ENCODE measurements at regions of chr13 and their contacts with region 1.

Region 1: DNA sequence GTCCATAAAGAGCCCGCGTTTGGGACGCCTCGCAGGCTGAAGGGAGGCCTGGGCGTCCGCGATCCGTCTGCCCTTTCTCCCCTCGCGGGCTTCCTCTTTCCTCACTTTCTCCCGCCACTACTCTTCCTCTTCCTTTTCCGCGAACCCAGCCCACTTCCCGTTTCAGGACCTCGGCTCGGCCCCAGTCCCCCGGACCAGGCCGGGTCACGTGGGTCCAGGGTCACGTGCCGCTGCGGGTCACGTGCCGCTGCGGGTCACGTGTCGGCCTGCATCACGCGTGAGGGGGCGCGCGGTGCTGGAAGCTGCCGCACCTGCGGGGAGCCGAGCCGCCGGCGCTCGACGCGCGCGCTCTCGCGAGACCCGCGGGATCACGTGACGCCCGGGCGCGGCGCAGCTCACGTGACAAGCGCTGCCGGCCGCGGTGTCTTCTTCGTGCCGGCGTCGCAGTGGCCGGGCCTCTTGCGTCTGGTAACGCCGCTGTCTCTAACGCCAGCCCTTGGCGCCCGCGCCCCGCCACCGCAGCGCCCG is at the start of gene LAMP1:
- DNase-seq: peak; percentile 92
- ATAC-seq: peak; percentile 70
- H3K4me3 ChIP-seq: peak within 1 kb of the TSS; percentile 95
- H3K27ac ChIP-seq: peak within 1 kb of the TSS; percentile 45
- H3K4me1 ChIP-seq: peaks cover 9% of the 10 kb centered on the region
- H3K27me3 ChIP-seq: no peaks in the 10 kb centered on the region
- CTCF ChIP-seq: no peak
- total RNA-seq, gene LAMP1: 110 and 111 TPM in 2 replicates

Region 2: DNA sequence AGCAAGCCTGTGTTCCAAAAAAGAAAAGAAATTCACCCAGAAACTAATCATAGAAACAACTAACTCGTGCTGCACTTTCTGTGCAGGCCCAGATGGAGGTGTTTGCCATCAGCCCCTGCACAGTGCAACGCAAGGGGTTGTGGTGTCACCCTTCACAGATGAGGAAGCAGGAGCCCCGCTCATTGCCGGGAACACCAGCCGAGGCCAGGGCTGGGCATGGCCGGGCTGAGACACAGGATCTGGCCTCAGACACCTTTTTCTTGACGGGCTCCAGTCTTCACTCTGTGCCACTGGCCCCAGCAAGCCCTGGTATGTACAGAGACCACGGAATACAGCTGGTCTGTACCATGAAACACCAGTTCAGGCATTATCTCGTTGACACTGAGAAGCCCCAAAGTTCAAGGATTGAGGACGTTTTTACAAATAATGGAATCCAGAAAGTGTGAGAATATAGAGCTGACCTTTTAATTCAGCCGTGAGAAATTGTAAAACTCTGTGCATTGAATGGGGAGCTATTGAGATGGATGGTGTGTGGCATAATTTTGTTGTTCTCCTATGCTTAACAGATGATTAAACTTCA is 44.3 kb before region 1 on chr13:
- CTCF ChIA-PET with region 1: no interaction called
- POLR2A ChIA-PET with region 1: interaction called, 32 read pairs
- intact Hi-C with region 1: no loop called
- DNase-seq: no peak
- ATAC-seq: no peak
- H3K4me3 ChIP-seq: no peak overlapping the region
- H3K27ac ChIP-seq: no peak overlapping the region
- H3K4me1 ChIP-seq: no peaks in the 10 kb centered on the region
- H3K27me3 ChIP-seq: no peaks in the 10 kb centered on the region
- CTCF ChIP-seq: no peak

Region 3: DNA sequence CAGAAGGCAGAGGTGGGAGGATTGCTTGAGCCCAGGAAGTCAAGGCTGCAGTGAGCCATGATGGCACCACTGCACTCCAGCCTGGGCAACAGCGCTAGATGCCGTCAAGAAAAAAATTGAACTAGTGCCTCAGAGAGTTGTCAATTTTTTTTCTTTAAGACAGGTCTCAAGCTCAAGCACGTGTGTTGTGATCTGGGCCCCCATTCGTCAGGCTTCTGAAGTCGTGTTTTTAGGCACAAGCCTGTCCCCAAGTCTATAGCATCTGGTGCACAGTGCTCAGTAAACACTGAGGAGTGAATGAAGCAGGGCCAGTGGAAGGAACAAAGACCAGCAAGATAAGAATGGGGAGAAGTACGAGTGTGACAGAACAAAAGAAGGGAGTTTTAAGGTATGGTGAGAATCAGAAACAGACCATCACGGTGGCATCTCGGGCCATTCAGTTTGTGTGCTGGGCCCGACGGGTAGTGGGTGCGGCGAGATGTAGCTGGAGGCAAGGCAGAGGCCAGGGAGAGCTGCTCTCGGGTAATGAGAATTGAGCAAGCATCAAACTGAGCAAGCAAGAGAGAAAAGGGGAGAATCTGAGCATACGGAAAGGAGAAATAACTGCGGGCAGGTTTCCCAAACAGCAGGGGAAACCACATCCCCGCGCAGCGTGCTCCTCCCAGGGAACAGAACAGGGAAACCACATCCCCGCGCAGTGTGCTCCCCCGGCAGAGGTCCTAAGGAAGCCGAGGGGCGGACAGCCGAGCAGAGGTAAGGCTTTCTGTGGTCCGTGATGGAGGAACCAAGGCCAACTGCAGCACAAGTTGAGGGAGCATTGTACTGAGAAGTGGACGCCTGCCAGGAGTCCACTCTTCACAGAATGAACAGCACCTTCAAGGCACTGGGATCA is 23.3 kb before region 1 on chr13:
- CTCF ChIA-PET with region 1: no interaction called
- POLR2A ChIA-PET with region 1: no interaction called
- intact Hi-C with region 1: no loop called
- DNase-seq: no peak
- ATAC-seq: no peak
- H3K4me3 ChIP-seq: no peak overlapping the region
- H3K27ac ChIP-seq: no peak overlapping the region
- H3K4me1 ChIP-seq: peaks cover 7% of the 10 kb centered on the region; the same call in 1 of the 2 replicates
- H3K27me3 ChIP-seq: no peaks in the 10 kb centered on the region
- CTCF ChIP-seq: no peak

Region 4: GRCh38 chr13:113283904-113284303 is 13.0 kb before region 1 on chr13:
- CTCF ChIA-PET with region 1: no interaction called
- POLR2A ChIA-PET with region 1: interaction called, 13 read pairs
- intact Hi-C with region 1: no loop called
- DNase-seq: no peak
- ATAC-seq: no peak
- H3K4me3 ChIP-seq: no peak overlapping the region
- H3K27ac ChIP-seq: no peak overlapping the region
- H3K4me1 ChIP-seq: no peaks in the 10 kb centered on the region
- H3K27me3 ChIP-seq: no peaks in the 10 kb centered on the region
- CTCF ChIP-seq: no peak

Region 5: GRCh38 chr13:113322043-113322461 is 25.1 kb after region 1 on chr13:
- CTCF ChIA-PET with region 1: no interaction called
- POLR2A ChIA-PET with region 1: interaction called, 44 read pairs
- intact Hi-C with region 1: no loop called
- DNase-seq: no peak
- ATAC-seq: no peak
- H3K4me3 ChIP-seq: no peak overlapping the region
- H3K27ac ChIP-seq: no peak overlapping the region
- H3K4me1 ChIP-seq: no peaks in the 10 kb centered on the region
- H3K27me3 ChIP-seq: no peaks in the 10 kb centered on the region
- CTCF ChIP-seq: no peak